Posterior cingulate gyrus (tissue), 11 donors: ENCODE measurements at regions of chr16 and their contacts with region 1.

Region 1: GRCh38 chr16:27455700-27456099 is 53.7 kb downstream of the IL21R start:
- DNase-seq: peak in 2 of 10 donors; percentile 51 to 60

Region 2: GRCh38 chr16:27179500-27180072 is 276.1 kb before region 1 on chr16:
- intact Hi-C with region 1: loop called (anchors 5 kb)
- DNase-seq: peak in 7 of 10 donors; percentile 40 to 92 (median 69)

Region 3: DNA sequence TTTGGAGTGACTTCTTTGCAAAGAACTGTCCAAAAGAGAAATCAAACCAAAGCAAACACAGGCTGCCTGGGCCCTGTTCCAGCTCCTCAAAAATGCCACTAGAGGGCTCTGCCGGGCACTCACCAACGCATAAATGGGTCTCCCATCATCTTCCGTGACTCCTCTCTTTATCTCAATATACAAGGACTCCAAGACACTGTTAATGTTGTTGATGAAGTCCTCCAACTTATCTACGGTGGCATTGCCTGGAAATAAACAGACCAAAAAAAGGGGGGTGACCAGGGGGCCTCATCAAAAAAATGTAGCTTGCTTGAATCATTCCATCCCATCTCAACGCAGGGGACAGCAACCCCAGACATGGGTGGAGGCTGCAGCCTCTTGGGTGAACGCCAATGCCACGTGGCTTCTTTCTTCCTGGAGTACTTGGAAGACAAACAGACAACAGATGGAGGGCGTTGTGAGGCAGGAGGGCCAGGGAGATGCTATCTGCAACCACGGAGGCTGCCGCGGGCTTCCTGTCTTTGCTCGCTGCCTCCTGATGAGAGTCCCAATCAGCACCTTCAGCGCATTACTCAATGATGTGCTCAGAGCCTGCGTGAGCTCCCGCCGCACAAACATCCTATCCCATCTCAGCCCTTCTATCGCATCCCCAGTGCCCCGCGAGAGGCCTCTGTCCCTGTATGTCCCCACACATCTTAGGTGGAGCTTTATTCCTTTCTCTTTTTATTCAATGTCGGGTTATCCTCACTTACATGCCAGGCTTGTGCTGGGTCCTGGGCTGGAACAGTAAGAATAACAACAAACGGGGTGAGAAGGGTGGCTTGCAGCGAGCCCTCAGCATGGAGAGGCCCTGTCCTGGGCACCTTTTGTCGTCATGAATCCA is 220.4 kb before region 1 on chr16:
- intact Hi-C with region 1: loop called (anchors 2 kb)
- DNase-seq: peak; percentile 46 to 94 (median 70)